A673 (cell line): ENCODE measurements at regions of chr1 and their contacts with region 1.

Region 1: DNA sequence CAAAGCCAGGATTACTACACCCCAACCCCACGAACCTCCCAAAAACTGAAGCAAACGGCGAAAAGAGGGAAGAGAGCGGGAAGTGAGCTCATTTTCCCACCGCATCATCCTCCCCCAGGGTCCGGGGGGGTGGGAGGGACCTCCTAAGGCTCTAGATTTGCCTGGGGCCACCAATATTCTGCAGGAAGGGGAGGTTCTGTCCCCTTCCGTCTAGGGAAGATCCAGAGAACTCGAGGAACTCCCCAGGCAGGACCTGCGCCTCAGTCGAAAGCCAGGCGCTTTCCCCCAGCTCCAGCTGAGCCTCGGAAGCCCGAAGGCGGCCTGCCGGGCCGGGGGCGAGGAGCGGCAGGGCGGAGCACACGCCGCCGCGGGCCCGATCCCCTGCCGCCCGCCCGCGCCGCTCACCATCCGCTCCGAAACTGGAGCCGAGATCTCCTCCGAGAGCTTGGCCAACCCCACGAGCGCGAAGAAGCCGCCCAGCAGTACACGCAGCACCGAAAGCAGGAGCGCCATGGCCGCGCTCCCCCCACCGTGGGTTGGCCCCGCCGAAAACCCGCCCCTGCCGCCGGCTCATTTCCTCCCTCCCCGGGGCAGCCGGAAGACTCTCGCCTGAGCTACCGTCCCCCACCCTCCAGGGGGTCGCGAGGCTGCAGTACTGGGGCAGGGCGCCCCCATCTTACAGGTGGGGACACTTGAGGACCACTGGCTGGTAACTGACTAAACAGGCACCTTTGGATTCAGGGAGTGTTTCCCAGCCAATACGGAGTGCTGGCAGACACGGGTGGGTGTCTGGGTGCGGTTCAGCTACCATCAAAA is at the start of gene TMEM35B:
- DNase-seq: peak; percentile 82
- H3K4me3 ChIP-seq: peak within 1 kb of the TSS; percentile 79
- H3K27ac ChIP-seq: peak within 1 kb of the TSS; percentile 92
- H3K4me1 ChIP-seq: peaks cover 13% of the 10 kb centered on the region
- H3K27me3 ChIP-seq: no peaks in the 10 kb centered on the region
- CTCF ChIP-seq: no peak
- total RNA-seq, gene TMEM35B: 10.6 and 11.3 TPM in 2 replicates

Region 2: GRCh38 chr1:34825455-34826091 is 159.4 kb before region 1 on chr1:
- CTCF ChIA-PET with region 1: interaction called, 12 read pairs
- POLR2A ChIA-PET with region 1: no interaction called
- intact Hi-C with region 1: no loop called
- DNase-seq: no peak
- H3K4me3 ChIP-seq: no peak overlapping the region
- H3K27ac ChIP-seq: no peak overlapping the region
- H3K4me1 ChIP-seq: no peaks in the 10 kb centered on the region
- H3K27me3 ChIP-seq: no peaks in the 10 kb centered on the region
- CTCF ChIP-seq: no peak

Region 3: GRCh38 chr1:35030756-35031446 is 45.9 kb after region 1 on chr1:
- CTCF ChIA-PET with region 1: no interaction called
- POLR2A ChIA-PET with region 1: no interaction called
- intact Hi-C with region 1: loop called (anchors 5 kb)
- DNase-seq: peak; percentile 27
- H3K4me3 ChIP-seq: peak overlapping the region; percentile 69
- H3K27ac ChIP-seq: peak overlapping the region; percentile 94
- H3K4me1 ChIP-seq: peaks cover 6% of the 10 kb centered on the region
- H3K27me3 ChIP-seq: no peaks in the 10 kb centered on the region
- CTCF ChIP-seq: no peak